ENCODE measurements at regions of chr1 and their contacts with region 1.

Region 1: GRCh38 chr1:228165372-228166169 is at the start of gene IBA57:
- DNase-seq: peak; percentile 97 to 100 (median 99)
- H3K4me3 ChIP-seq: peak within 1 kb of the TSS; percentile 70 to 99 (median 87)
- H3K27ac ChIP-seq: peak within 1 kb of the TSS; percentile 79 to 100 (median 99)
- H3K27me3 ChIP-seq: peaks cover 0 to 8% (median 0%) of the 10 kb centered on the region in 45 donors
- CTCF ChIP-seq: peak; percentile 53 to 96 (median 77)
- total RNA-seq, gene IBA57: 6.6 to 16.0 (median 9.7) TPM

Region 2: DNA sequence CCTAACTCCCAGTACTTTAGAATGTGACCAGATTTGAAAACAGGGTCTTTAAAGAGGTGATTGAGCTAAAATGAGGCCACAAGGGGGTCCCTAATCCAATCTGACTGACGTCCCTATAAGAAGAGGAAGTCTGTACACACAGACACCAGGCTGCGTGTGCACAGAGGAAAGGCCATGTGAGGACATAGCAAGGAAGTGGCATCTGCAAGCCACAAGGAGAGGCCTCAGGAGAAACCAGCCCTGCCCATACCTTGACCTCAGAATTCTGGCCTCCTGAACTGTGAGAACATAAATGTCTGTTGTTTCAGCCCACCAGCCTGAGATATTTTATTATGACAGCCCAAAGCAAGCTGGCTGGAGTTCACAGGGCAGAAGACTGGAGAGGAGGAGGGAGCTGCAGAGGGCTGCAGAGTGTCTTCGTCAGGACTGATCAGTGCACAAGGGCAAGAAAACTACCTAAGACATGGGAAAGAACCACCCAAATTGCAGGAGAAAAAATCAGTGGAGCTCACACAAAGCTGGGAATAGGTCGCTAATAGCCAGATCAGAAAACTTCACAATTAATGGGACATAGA is 203.8 kb before region 1 on chr1:
- intact Hi-C with region 1: no loop called
- DNase-seq: no peak
- H3K4me3 ChIP-seq: no peak overlapping the region
- H3K27ac ChIP-seq: no peak overlapping the region
- H3K27me3 ChIP-seq: peaks cover 0 to 17% (median 0%) of the 10 kb centered on the region in 45 donors
- CTCF ChIP-seq: no peak

Region 3: DNA sequence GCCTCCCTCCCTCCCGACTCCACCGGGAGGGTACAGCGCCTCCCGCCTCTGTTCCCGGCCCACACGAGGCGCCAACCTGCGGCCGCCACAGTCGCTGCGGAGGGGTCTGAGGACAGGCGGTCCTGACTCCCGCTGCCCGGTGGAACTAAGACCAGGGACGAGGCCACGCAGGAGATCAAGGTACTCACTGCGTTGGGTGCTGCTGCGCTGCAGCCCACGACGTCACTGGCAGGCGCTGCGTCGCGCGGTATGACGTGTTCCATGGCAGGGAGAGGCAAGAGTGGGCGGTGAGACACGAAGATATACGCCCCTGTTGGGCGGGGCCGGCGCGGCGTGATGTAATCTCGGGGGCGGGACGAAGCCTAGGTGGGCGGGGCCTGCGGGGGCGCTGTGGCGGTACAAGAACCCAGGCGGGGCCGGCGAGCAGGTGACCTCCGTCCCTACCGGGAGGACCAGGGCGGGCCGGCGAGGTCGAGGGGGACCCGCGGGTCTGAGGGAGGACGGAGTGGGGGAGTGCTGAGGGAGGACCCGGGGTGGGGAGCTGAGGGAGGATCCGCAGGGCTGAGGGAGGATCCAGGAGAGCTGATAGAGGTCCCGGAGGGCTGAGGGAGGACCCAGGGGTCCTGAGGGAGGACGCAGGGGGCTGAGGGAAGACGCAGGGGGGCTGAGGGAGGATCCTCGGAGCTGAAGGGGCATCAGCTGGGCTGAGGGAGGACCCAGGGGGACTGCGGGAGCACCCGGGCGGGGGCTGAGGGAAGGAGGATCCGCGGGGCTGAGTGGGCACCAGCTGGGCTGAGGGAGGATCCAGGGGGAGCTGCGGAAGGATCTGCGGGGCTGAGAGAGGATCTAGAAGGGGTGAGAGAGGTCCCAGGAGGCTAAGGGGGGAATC is 56.3 kb before region 1 on chr1 and contains the start of gene MRPL55:
- intact Hi-C with region 1: loop called in 1 of 2 experiments (anchors 2 kb)
- DNase-seq: peak; percentile 99 to 100 (median 100)
- H3K4me3 ChIP-seq: peak within 1 kb of the TSS; percentile 71 to 100 (median 98)
- H3K27ac ChIP-seq: peak within 1 kb of the TSS; percentile 58 to 98 (median 88)
- H3K27me3 ChIP-seq: no peaks in the 10 kb centered on the region
- CTCF ChIP-seq: peak in 45 of 56 donors; percentile 13 to 65 (median 34)
- total RNA-seq, gene MRPL55: 31.4 to 79.7 (median 54.4) TPM

Region 4: GRCh38 chr1:228139944-228140656 is 25.5 kb before region 1 on chr1 and contains the start of gene GUK1:
- intact Hi-C with region 1: loop called (anchors 1 kb)
- DNase-seq: peak; percentile 97 to 100 (median 99)
- H3K4me3 ChIP-seq: peak within 1 kb of the TSS; percentile 61 to 100 (median 95)
- H3K27ac ChIP-seq: peak within 1 kb of the TSS; percentile 58 to 100 (median 97)
- H3K27me3 ChIP-seq: no peaks in the 10 kb centered on the region
- CTCF ChIP-seq: peak in 52 of 56 donors; percentile 15 to 79 (median 49)
- total RNA-seq, gene GUK1: 226 to 417 (median 315) TPM

Region 5: GRCh38 chr1:228259951-228260350 is 94.4 kb after region 1 on chr1:
- intact Hi-C with region 1: no loop called
- DNase-seq: no peak
- H3K4me3 ChIP-seq: no peak overlapping the region
- H3K27ac ChIP-seq: no peak overlapping the region
- H3K27me3 ChIP-seq: no peaks in the 10 kb centered on the region
- CTCF ChIP-seq: no peak

Region 6: DNA sequence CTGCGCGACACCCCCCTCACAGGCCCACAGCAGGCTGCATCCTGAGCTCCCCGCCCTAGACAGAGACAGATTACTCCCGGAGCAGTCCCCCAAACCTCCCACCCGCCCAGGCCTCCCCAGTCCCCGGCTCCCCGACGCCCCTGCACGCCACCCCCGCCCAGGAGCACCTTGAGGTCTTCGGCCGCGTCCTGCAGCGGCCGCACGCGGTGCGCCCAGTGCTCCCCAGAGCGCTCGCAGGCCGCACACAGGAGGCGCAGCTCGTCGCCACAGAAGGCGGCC is 240.4 kb after region 1 on chr1:
- intact Hi-C with region 1: loop called in 1 of 2 experiments (anchors 5 kb)
- DNase-seq: peak in 1 of 10 donors; percentile 31
- H3K4me3 ChIP-seq: peak overlapping the region; percentile 75 to 99 (median 93)
- H3K27ac ChIP-seq: peak overlapping the region in 48 of 59 donors; percentile 51 to 92 (median 83)
- H3K27me3 ChIP-seq: no peaks in the 10 kb centered on the region
- CTCF ChIP-seq: no peak

Region 7: DNA sequence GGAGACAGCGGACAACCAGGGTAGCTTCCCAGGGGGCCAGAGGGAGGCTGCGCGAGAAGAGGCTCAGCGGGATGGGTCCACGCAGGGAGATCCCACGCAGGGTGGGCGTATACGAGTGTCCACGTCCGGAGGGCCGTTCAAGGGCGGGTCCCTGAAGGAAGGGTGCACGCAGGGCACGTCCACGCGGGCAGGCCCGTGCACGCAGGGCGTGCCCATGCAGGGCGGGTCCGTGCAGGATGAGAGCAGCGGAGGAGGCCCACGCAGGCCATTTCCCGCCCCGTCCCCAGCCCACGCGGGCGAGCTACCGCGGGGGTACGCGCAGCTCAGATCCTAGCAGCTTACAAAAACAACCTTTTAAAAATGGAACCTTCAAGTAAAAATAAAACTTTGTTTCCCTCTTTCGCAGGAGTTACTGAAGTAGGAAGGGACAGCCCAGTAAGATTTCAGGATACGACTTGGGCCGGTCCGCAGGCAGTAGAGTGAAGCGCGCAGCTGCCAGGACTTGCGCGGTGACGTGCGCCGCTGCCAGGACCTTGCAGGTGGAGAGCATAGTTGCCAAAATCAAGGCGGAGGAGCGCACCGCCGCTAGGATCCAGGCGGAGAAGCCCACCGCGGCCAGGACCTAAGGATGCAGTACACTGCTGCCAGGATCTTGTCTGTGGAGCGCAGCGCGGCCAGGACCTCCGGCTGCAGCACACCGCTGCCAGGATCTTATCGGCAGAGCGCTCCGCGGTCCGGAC is 321.2 kb after region 1 on chr1:
- intact Hi-C with region 1: no loop called
- DNase-seq: peak; percentile 56 to 87 (median 78)
- H3K4me3 ChIP-seq: peak overlapping the region; percentile 66 to 99 (median 89)
- H3K27ac ChIP-seq: peak overlapping the region; percentile 97 to 100 (median 100)
- H3K27me3 ChIP-seq: no peaks in the 10 kb centered on the region
- CTCF ChIP-seq: peak in 6 of 56 donors; percentile 6 to 31 (median 16)

Measured in dorsolateral prefrontal cortex (tissue), 120 donors.